A673 (cell line): ENCODE measurements at regions of chr1 and their contacts with region 1.

Region 1: GRCh38 chr1:11448375-11449099 is 30.4 kb upstream of the DISP3 start:
- DNase-seq: no peak
- H3K4me3 ChIP-seq: no peak overlapping the region
- H3K27ac ChIP-seq: no peak overlapping the region
- H3K4me1 ChIP-seq: no peaks in the 10 kb centered on the region
- H3K27me3 ChIP-seq: peaks cover 65% of the 10 kb centered on the region
- CTCF ChIP-seq: no peak

Region 2: DNA sequence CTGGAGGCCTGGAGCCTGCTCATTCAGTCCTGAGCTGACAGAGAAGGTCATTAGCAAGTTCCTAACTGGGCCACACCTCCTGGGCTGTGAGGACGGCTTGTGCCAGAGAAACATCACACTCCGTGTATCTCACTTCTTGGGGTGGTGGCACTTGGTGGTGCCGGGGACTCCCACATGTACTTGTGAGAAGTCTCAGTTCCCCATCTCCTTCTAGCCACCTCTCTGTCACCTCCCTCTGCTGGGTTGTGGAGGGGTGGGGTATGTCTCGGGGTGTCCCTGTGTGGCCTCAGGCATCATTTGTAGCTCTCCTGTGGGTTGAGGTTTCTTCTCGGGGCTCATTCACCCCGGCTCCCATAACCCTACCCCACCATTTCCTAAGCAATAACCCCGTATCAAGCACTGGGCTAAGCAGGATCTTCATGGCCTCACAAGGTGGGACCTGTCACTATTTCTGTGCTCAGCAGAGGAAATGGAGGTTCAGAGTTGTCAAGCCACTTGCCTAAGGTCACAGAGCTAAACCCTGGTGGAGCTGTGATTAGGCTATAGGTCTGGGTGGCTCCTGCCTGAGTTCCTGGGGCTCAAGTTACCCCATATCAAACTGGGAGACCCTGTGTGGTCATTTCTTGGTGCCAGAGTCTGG is 113.0 kb before region 1 on chr1:
- CTCF ChIA-PET with region 1: no interaction called
- POLR2A ChIA-PET with region 1: no interaction called
- intact Hi-C with region 1: no loop called
- DNase-seq: no peak
- H3K4me3 ChIP-seq: no peak overlapping the region
- H3K27ac ChIP-seq: no peak overlapping the region
- H3K4me1 ChIP-seq: no peaks in the 10 kb centered on the region
- H3K27me3 ChIP-seq: peaks cover 19% of the 10 kb centered on the region
- CTCF ChIP-seq: no peak

Region 3: GRCh38 chr1:11501558-11501897 is 53.0 kb after region 1 on chr1:
- CTCF ChIA-PET with region 1: no interaction called
- POLR2A ChIA-PET with region 1: no interaction called
- intact Hi-C with region 1: no loop called
- DNase-seq: no peak
- H3K4me3 ChIP-seq: no peak overlapping the region
- H3K27ac ChIP-seq: no peak overlapping the region
- H3K4me1 ChIP-seq: no peaks in the 10 kb centered on the region
- H3K27me3 ChIP-seq: peaks cover 31% of the 10 kb centered on the region
- CTCF ChIP-seq: no peak

Region 4: GRCh38 chr1:12333036-12333785 is 884.7 kb after region 1 on chr1:
- CTCF ChIA-PET with region 1: no interaction called
- POLR2A ChIA-PET with region 1: interaction called, 20 read pairs
- intact Hi-C with region 1: no loop called
- DNase-seq: no peak
- H3K4me3 ChIP-seq: no peak overlapping the region
- H3K27ac ChIP-seq: no peak overlapping the region
- H3K4me1 ChIP-seq: no peaks in the 10 kb centered on the region
- H3K27me3 ChIP-seq: no peaks in the 10 kb centered on the region
- CTCF ChIP-seq: no peak